Colonic mucosa (tissue), 4 donors: ENCODE measurements at regions of chr22 and their contacts with region 1.

Region 1: DNA sequence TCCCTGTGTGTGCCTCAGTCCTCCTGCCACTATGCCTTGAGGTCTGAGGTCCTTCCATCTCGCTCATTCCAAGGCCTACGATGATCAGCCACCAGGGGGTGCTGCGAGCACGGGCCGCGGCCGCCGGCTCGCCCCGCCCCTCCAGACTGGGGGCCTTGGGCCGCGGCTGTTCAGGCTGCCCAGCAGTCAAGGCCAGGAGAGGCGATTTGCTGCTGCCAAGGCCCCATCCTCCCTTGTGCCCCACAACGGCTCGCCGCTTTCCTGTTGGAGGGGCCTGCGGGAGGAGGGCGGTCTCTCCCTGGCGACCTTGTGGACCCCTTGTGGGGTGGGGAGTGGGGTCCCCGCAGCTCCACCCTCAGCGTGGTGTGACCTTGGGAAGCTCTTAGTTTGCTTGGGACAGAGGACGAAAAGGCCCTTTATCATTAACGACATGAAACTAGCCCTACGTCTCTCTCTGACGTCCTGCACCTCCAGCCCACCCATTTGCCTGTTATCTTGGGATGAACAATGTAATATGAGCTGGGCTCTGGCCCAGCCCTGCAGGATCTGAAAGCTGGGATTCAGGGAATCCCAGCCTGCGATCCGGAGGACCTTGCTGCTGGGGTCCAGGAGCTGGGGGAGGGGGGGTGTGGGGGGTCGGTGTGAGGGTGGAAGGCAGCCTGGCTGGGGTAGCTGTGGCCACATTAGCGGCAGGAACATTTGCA is 5.3 kb upstream of the GALR3 start:
- DNase-seq: peak; percentile 89
- H3K4me3 ChIP-seq: peak overlapping the region; percentile 38
- H3K27ac ChIP-seq: no peak overlapping the region
- H3K4me1 ChIP-seq: peaks cover 16% of the 10 kb centered on the region
- H3K27me3 ChIP-seq: peaks cover 8% of the 10 kb centered on the region
- CTCF ChIP-seq: peak; percentile 95

Region 2: DNA sequence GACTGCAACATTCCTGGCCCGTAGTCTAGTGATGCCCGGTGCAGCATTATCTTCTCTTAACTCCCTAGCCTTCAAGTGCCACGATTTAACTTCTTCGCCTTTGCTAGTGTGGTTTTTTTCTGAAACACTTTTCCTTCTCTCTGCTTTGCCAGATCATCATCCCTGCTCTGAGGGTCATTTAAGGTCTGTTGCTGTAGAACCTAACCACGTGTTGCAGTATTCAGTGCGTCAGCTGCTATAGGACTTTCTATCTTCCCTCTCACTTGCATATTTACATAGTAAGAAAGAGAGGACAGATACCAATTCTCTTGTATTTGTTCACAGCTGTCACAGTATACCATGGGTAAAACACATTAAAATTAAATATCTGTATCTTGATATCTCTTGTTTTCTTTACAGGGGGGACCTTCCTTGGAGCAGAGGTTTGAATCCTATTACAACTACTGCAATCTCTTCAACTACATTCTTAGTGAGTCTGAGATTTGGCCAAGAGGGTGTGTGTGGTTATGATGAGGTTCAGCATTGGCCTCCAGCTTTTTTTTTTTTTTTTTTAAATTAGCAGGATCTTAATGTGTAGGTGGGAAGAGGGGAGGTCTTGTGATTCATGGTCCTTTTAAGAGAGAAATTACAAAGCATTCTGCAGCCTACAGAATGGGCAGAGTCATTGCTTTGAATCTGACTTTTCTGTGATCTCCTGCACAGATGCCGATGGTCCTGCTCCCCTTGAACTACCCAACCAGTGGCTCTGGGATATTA is 44.9 kb after region 1 on chr22:
- intact Hi-C with region 1: loop called (anchors 2 kb)
- DNase-seq: no peak
- H3K4me3 ChIP-seq: no peak overlapping the region
- H3K27ac ChIP-seq: no peak overlapping the region
- H3K4me1 ChIP-seq: no peaks in the 10 kb centered on the region
- H3K27me3 ChIP-seq: no peaks in the 10 kb centered on the region
- CTCF ChIP-seq: no peak

Region 3: DNA sequence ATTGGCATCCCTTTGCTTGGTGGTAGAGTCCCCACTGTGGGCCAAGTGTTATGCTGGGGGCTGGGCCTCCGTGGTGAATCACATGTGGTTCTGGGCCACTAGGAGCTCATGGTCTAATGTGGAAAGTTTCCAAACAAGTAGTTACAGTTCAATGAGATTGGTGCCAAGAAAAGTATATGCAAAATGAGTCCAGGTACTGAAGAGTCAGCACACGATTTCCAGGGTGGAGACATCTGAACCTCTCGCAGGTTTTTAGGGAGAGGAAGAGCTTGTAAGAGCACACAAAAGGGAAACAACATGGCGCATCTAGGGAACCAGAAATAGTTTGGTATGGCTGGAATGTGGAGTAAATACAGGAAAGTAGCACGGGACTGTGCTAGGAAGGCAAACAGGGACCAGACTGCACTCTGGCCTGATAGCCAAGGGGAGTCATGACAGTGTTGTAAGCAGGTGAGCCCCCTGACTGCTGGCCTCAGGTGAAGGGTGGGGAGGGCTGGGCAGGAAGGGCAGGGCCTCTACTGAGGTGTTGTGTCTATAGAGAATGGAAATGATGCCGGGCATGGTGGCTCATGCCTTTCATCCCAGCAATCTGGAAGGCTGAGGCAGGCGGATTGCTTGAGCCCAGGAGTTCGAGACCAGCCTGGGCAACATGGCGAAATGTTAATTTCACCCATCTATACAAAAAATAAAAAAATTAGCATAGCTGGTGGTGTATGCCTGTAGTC is 148.2 kb after region 1 on chr22:
- intact Hi-C with region 1: loop called (anchors 2 kb)
- DNase-seq: no peak
- H3K4me3 ChIP-seq: no peak overlapping the region
- H3K27ac ChIP-seq: no peak overlapping the region
- H3K4me1 ChIP-seq: no peaks in the 10 kb centered on the region
- H3K27me3 ChIP-seq: no peaks in the 10 kb centered on the region
- CTCF ChIP-seq: no peak